ENCODE measurements at regions of chr3 and their contacts with region 1.

Region 1: DNA sequence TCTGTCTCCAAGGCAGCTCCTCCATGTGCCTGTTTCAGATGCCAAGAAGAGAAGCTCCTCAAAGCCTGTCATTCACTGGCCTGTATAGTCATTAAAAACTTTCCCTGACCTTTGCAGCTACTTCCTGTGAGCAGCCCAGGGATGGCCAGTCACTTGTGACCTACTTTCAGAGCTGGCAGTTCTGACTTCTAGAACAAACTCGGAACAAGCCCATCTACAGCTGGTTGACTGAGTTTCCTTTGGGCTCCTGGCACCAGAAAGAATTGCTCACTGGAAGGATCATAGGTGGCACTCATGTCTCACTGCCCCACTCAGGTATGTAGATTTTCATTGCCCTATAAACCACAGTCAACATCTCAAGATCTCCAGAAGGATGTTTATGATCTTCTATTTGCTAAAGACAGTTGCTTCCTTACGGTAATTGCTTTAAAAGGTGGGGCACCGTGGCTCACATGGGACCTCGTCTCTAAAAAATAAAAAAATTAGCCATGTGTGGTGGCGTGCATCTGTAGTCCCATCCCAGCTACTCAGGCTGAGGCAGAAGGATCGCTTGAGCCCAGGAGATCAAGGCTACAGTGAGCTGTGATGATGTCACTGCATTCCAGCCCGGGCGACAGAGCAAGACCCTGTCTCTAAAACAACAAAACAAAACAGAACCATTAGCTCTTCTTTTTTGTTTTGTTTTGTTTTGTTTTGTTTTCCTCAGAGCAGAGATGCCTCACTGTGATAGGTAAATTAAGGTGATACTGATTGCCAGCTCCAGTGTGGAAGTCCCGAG is 11.2 kb upstream of the ATP13A3 start:
- DNase-seq: no peak
- CTCF ChIP-seq: no peak

Region 2: DNA sequence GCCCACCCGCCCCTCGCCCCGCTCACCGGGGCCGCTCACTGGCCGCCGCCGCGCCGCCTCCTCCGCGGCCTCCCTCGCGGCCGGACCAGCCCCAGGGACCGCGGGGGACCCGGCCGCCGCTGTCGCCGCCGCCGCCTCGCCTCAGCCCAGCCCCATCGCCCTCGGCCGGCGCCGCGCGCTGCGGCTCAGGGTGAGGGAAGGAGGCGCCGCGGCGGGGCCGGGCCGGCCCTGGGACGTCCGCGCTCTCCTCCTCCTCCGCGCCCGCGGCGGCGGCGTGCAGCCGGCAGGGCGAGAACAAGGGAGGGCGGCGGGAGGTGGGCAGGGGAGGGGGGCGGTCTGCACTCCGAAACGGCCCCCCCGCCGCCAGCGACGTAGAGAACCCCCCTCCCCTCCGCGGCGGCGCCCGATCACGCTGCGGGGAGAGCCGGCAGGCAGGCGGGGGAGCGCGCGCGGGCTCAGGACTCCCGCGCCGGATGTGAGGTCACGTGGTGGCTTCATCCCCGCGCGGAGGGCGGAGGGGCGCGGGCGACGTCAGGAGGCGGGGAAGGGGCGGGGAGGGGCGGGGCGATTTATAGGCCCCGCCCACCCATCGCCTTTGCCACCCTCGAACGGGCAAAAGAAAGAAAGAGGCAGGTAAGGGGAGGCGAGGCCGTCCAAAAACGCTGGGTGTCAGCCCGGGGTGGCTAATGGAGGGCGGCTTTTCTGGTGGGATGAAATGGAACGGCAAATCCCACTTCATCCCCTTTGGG is 11.3 kb before region 1 on chr3 and contains the start of gene ATP13A3:
- CTCF ChIA-PET with region 1: interaction called, 12 read pairs
- POLR2A ChIA-PET with region 1: no interaction called
- DNase-seq: peak; percentile 97
- CTCF ChIP-seq: no peak

Region 3: GRCh38 chr3:194893121-194893987 is 395.3 kb after region 1 on chr3:
- CTCF ChIA-PET with region 1: no interaction called
- POLR2A ChIA-PET with region 1: no interaction called
- DNase-seq: no peak
- CTCF ChIP-seq: no peak

Measured in GM10248 (cell line).